ENCODE measurements at regions of chr21 and their contacts with region 1.

Region 1: DNA sequence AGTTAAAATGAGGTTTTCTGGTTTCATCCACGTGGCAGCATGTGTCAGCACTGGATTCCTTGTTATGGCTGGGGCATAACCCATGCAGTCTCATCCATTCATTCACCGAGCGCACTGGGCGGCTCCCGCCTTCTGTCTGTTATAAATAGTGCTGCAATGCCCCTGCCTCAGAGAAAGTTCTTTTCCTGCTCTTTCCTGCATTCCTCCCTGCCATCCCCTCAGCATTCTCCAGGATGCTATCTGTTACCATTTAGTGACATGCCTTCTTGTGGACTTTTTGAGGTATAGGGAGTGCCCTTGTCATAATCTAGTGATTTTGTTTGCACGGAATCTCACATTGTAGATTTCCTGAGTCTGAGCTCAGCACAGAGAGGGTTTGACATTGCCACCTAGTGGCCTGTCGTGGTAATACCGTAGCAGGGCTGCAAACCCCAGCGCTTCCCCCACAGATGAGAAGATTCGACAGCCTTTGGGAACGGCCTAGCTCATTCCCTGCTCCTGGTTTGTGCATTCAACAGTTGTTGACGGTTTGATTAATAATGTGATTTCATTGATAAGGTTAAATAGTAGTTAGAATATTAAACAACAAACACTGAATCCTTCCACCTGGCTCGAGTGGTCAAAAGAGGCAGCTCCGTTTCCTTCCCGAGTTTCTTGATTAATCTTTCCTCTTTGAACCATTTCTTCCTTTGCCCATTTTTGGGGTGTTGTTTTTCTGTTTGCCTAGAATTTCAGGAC is 46.3 kb downstream of the UMODL1 start:
- DNase-seq: no peak
- H3K4me3 ChIP-seq: peak overlapping the region; percentile 32; the same call in 1 of the 2 replicates
- CTCF ChIP-seq: peak; percentile 83

Region 2: GRCh38 chr21:41283211-41283818 is 834.1 kb before region 1 on chr21:
- CTCF ChIA-PET with region 1: interaction called, 10 read pairs
- POLR2A ChIA-PET with region 1: no interaction called
- DNase-seq: peak; percentile 45
- H3K4me3 ChIP-seq: no peak overlapping the region
- CTCF ChIP-seq: peak; percentile 74

Region 3: DNA sequence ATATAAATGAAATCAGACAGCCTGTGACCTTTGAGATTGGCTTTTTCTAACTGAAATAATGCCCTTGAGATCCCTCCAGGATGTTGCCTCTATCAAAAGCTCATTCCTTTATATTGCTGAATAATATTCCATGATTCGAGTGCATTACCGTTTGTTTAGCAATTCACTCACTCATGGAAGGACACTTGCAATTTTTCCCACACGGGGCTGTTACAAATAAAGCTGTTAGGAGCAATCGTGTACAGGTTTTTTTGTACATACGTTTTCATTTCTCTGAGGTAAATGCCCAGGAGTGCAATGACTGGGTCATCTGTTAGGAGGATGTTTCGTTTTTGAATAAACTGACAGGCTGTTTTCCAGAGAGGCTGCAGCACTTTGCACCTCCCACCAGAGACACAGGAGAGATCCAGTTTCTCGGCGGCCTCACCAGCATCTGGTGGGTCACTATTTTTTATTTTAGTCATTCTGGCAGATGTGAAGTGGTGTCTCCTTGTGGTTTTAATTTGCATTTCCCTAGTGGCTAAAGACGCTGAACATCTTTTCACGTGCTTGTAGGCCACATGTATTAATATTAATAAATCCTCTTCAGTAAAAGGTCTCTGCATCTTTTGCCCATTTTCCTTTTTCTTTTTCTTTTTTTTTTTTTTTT is 249.2 kb before region 1 on chr21:
- CTCF ChIA-PET with region 1: interaction called, 12 read pairs
- POLR2A ChIA-PET with region 1: no interaction called
- DNase-seq: no peak
- H3K4me3 ChIP-seq: no peak overlapping the region
- CTCF ChIP-seq: no peak

Region 4: GRCh38 chr21:41884501-41885030 is 232.8 kb before region 1 on chr21:
- CTCF ChIA-PET with region 1: interaction called, 15 read pairs
- POLR2A ChIA-PET with region 1: no interaction called
- DNase-seq: no peak
- H3K4me3 ChIP-seq: no peak overlapping the region
- CTCF ChIP-seq: no peak

Region 5: DNA sequence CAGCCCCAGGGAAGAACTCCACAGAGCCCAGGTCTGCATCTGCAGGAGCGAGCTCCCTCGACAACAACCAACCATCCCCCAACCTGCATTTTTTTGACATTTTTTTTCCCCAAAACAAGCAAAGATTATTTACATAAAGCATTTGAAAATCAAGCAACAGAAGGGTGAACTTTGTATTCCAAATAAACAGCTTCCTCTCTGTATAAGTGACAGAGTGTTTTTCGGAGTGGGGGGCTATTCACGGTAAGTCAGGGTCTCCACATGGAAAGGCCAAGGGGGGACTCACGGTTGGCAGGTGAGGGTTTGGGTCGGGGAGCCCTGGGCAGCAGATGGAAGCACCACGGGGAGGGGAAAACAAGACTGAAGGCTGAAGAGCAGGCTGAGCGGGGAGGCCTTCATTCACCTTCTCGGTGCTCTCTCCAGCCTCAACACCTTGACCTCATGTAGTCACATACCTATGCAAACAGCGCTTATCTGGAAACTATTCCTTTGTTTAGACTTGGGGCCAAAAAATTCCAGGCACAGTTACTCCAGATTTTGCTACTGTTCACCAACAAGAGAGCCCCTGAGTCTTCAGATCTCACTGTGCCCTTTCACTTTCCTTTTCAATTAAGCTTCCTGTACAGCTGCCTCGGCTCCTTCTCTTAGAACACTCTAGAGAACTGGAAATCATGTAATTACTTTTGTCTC is 191.1 kb before region 1 on chr21:
- CTCF ChIA-PET with region 1: interaction called, 23 read pairs
- POLR2A ChIA-PET with region 1: no interaction called
- DNase-seq: no peak
- H3K4me3 ChIP-seq: peak overlapping the region; percentile 46
- CTCF ChIP-seq: no peak

Region 6: GRCh38 chr21:42040411-42041180 is 76.8 kb before region 1 on chr21:
- CTCF ChIA-PET with region 1: interaction called, 11 read pairs
- POLR2A ChIA-PET with region 1: no interaction called
- DNase-seq: peak; percentile 100
- H3K4me3 ChIP-seq: peak overlapping the region; percentile 20; the same call in 1 of the 2 replicates
- CTCF ChIP-seq: no peak

Region 7: GRCh38 chr21:42145569-42146272 is 28.3 kb after region 1 on chr21:
- CTCF ChIA-PET with region 1: interaction called, 11 read pairs
- POLR2A ChIA-PET with region 1: no interaction called
- DNase-seq: no peak
- H3K4me3 ChIP-seq: no peak overlapping the region
- CTCF ChIP-seq: peak; percentile 87